ENCODE measurements at regions of chr12 and their contacts with region 1.

Region 1: DNA sequence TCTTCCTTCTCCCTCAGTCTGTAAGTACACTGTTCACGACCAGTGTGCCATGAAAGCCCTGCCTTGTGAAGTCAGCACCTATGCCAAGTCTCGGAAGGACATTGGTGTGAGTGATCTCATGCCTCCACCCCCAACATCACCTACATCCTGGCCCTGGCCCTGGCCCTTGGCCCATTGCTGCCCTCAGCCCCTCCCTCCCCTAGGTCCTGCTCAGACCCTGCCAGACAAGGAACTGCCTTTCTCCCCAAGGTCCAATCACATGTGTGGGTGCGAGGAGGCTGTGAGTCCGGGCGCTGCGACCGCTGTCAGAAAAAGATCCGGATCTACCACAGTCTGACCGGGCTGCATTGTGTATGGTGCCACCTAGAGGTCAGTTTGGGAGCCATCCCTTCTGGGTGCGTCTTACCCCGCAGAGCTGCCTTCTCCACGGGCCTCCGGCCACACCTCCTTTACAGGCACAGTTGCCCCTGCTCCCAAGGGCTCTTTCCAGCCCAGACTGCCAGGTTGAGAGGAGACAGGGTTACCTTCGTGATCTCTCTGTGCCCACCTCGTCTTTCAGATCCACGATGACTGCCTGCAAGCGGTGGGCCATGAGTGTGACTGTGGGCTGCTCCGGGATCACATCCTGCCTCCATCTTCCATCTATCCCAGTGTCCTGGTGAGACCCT is 9.2 kb downstream of the DGKA start:
- DNase-seq: peak; percentile 83 to 95
- H3K4me3 ChIP-seq: no peak overlapping the region; a peak in 1 of 8 replicates
- H3K27ac ChIP-seq: no peak overlapping the region
- H3K4me1 ChIP-seq: peaks cover 0 to 9% (median 2%) of the 10 kb centered on the region in 4 experiments; a peak in 4 of 7 replicates
- H3K27me3 ChIP-seq: peaks cover 0 to 2% (median 0%) of the 10 kb centered on the region in 4 experiments; a peak in 1 of 7 replicates
- CTCF ChIP-seq: peak; percentile 83 to 100 (median 98)
- EP300 ChIP-seq: no peak
- POLR2A ChIP-seq: 0 out of 3 replicates have a peak, but pooled peaks of 1 of the 2 experiments have one; percentile 22
- RAD21 ChIP-seq: peak; percentile 82 to 88

Region 2: DNA sequence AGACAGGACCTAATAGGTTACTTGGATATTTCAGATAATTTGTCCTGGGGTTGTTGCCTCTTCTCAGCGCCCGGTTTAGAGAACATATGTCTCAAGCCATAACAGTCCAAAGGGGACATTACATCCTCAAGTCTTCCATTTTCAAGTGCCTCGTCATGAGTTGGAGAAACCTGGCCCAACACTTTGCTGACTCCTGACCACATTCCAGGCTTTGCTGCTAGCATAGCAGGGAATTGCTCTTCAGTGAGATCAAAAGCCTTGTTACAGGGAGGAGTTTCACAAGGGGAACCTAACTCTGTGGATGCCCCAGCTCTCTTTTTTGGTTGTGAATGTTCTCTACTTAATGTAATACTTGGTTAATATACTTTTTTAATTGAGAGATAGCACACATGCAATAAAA is 89.3 kb before region 1 on chr12:
- CTCF ChIA-PET with region 1: no interaction called
- POLR2A ChIA-PET with region 1: no interaction called
- DNase-seq: no peak
- H3K4me3 ChIP-seq: no peak overlapping the region
- H3K27ac ChIP-seq: no peak overlapping the region
- H3K4me1 ChIP-seq: no peaks in the 10 kb centered on the region; a peak in 1 of 7 replicates
- H3K27me3 ChIP-seq: no peaks in the 10 kb centered on the region
- CTCF ChIP-seq: no peak
- EP300 ChIP-seq: no peak
- POLR2A ChIP-seq: no peak
- RAD21 ChIP-seq: no peak

Region 3: DNA sequence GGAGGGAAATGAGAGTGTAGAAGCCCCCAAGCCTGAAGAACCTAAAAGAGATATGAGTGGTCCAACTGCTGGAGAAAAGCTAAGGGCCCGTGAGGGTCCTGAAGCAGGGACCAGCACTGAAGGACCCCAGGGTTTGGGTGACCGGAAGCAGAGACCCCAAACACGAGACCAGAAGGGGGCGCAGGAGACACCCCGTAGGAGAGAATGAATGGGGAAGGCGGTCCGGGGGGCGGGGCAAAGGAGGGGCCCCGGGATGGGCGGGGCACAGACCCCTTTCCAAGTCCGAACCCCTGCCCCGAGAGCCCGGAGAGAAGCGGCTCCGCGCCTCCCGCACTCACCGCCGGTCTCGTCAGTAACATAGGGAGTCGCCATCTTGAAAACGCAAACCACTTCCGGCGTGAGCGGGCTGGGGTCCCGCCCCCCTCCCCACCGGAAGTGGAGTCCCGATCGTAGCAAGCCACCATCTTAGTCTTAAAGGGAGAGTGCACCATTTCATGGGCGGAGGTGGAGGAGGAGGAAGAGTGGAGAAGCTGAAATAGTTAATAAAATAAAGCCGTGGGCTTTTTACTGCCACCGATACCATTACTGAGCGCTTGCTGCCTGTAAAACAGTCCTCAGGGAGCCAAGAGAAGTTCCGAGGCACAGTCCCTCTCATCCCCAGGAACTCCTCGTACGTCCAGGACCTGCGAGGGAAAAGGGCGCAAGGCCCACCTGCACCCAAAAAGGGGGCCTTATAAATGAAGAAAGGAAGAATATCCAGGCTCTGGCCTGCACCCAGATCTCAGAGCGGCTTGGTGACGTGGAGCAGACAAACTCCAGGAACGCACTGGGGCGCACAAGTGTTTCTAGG is 13.2 kb before region 1 on chr12:
- CTCF ChIA-PET with region 1: interaction called, 71 read pairs
- POLR2A ChIA-PET with region 1: interaction called, 18 read pairs
- DNase-seq: peak; percentile 84 to 94
- H3K4me3 ChIP-seq: peak overlapping the region; percentile 90 to 100 (median 94)
- H3K27ac ChIP-seq: peak overlapping the region; percentile 84
- H3K4me1 ChIP-seq: peaks cover 8 to 19% (median 11%) of the 10 kb centered on the region in 4 experiments; a peak in 6 of 7 replicates
- H3K27me3 ChIP-seq: peaks cover 0 to 6% (median 1%) of the 10 kb centered on the region in 4 experiments; a peak in 2 of 7 replicates
- CTCF ChIP-seq: peak; percentile 51 to 66 (median 59)
- EP300 ChIP-seq: no peak
- POLR2A ChIP-seq: peak in 1 of 2 experiments; percentile 39; a peak in 2 of 3 replicates
- RAD21 ChIP-seq: peak; percentile 23 to 35; a peak in 3 of 4 replicates

Region 4: DNA sequence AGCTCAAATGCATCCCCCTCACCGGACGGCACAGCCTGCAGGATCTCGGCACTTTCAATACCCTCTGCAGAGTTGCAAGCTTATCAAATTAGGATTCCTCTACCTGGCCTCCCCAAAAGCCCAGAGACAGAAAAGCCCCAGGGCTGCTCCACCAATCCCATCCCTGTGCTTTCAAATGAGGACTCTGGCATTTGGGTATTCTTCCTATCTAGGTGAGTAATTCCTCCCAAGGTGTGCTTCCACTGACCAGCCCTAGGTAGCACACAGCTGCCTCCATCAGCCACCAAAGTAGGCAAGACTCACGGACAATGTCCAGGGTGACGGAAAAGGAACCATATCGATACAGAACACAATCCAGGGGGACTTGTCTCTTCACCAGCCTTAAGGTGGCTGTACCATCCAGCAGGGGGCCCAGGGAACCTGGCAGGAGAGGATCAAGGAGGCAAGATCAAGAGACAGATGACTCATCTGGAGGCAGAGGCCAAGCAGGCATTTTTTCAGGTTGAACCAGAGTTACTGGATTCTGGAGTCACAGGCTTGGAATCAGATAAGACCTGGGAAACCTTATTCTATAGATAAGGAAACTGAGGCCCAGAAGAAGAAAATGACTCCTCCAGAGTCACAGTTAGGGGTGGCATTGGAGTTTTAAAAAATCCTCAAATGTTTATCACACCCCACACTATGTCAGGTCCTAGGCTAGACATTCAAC is 15.8 kb after region 1 on chr12:
- CTCF ChIA-PET with region 1: interaction called, 13 read pairs
- POLR2A ChIA-PET with region 1: interaction called, 5 read pairs
- DNase-seq: no peak
- H3K4me3 ChIP-seq: no peak overlapping the region
- H3K27ac ChIP-seq: no peak overlapping the region
- H3K4me1 ChIP-seq: no peaks in the 10 kb centered on the region
- H3K27me3 ChIP-seq: no peaks in the 10 kb centered on the region
- CTCF ChIP-seq: peak in 1 of 3 experiments; percentile 9; a peak in 1 of 4 replicates
- EP300 ChIP-seq: no peak
- POLR2A ChIP-seq: no peak
- RAD21 ChIP-seq: no peak; a peak in 1 of 4 replicates